ENCODE measurements at regions of chr4 and their contacts with region 1.

Region 1: GRCh38 chr4:142142366-142143054 is 506.1 kb downstream of the IL15 start:
- DNase-seq: peak; percentile 31
- ATAC-seq: peak; percentile 32; the same call in 1 of the 2 replicates
- H3K4me3 ChIP-seq: no peak overlapping the region
- H3K27ac ChIP-seq: peak overlapping the region; percentile 20
- H3K4me1 ChIP-seq: peaks cover 39% of the 10 kb centered on the region
- H3K27me3 ChIP-seq: no peaks in the 10 kb centered on the region
- CTCF ChIP-seq: no peak

Region 2: DNA sequence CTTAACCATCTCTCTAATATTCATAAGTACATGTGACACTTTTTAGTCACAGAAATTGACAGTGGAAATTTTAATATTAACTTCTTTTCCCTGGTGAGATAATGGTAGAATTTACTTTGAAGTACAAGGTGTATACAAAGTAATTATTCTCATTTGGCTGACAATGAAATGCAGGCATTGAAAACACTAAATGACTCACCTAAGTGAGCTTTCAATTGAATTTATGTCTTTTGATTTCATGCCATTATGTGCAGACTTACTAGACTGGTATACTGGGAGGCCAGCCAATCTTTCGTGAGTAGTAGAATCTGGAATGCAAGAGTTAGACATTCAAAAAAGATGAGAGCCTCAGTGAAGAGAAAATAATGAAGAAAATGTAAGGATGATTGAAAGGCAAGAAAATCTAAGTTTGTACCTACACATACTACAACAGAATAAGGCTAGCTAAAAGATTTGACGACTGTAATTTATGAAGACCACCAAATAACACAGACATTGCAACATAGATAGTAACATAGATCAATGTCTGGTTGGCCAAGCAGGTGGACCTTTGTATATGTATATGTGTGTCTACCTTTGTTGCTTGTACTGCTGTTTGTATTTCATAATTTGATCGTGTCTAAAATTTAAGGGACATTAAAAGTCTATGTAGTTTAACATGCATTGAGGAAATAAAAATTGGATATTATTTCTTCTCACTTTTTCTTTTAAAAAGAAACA is 46.5 kb before region 1 on chr4:
- CTCF ChIA-PET with region 1: no interaction called
- POLR2A ChIA-PET with region 1: no interaction called
- intact Hi-C with region 1: no loop called
- DNase-seq: peak; percentile 98
- ATAC-seq: peak; percentile 86
- H3K4me3 ChIP-seq: no peak overlapping the region
- H3K27ac ChIP-seq: peak overlapping the region; percentile 71
- H3K4me1 ChIP-seq: peaks cover 33% of the 10 kb centered on the region
- H3K27me3 ChIP-seq: no peaks in the 10 kb centered on the region
- CTCF ChIP-seq: no peak

Region 3: GRCh38 chr4:142168181-142168580 is 25.7 kb after region 1 on chr4:
- CTCF ChIA-PET with region 1: no interaction called
- POLR2A ChIA-PET with region 1: no interaction called
- intact Hi-C with region 1: loop called (anchors 2 kb)
- DNase-seq: no peak
- ATAC-seq: no peak
- H3K4me3 ChIP-seq: no peak overlapping the region
- H3K27ac ChIP-seq: no peak overlapping the region
- H3K4me1 ChIP-seq: no peaks in the 10 kb centered on the region
- H3K27me3 ChIP-seq: no peaks in the 10 kb centered on the region
- CTCF ChIP-seq: no peak

Region 4: GRCh38 chr4:142282870-142283431 is 140.4 kb after region 1 on chr4:
- CTCF ChIA-PET with region 1: no interaction called
- POLR2A ChIA-PET with region 1: no interaction called
- intact Hi-C with region 1: loop called (anchors 5 kb)
- DNase-seq: peak; percentile 53
- ATAC-seq: no peak
- H3K4me3 ChIP-seq: no peak overlapping the region
- H3K27ac ChIP-seq: no peak overlapping the region
- H3K4me1 ChIP-seq: peaks cover 13% of the 10 kb centered on the region
- H3K27me3 ChIP-seq: no peaks in the 10 kb centered on the region
- CTCF ChIP-seq: peak; percentile 78